ENCODE measurements at regions of chr20 and their contacts with region 1.

Region 1: DNA sequence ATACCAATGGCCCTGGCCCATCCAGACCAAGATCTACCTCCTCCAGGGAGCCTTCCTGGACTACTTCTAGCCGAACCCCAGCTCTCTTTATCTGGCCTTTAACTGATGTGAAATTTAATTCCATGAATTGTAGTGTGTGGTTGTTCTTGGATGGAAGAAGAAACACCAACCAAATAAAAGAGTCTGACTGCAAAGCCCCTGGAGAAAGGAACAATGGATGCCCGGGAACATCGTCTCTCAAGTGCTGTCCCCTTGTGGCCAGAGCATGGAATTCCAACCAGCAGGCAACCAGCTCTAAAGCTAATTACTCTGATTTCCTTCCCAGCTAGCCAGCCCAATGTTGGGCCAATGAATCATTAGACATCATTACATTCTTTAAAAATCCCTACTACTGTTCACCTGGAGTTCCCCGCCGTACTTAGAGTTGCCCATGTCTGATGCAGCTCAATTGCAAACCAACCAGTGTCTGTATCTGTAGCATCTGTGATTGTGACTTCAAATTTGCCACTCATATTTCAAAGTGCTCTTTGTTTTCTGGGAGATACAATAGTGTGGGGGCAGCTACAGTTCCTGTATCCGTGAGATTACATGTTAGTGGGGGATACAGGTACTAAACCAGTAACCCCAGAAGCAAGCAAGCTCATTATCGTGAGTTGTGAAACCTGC is 141.1 kb downstream of the ANKRD60 start:
- DNase-seq: peak in 1 of 2 experiments; percentile 67
- H3K4me3 ChIP-seq: no peak overlapping the region
- H3K27ac ChIP-seq: no peak overlapping the region
- H3K4me1 ChIP-seq: peaks cover 0 to 3% (median 0%) of the 10 kb centered on the region in 4 experiments; a peak in 1 of 7 replicates
- H3K27me3 ChIP-seq: no peaks in the 10 kb centered on the region; a peak in 1 of 7 replicates
- CTCF ChIP-seq: peak; percentile 90 to 97 (median 90)
- EP300 ChIP-seq: no peak
- POLR2A ChIP-seq: no peak
- RAD21 ChIP-seq: peak; percentile 89 to 92

Region 2: DNA sequence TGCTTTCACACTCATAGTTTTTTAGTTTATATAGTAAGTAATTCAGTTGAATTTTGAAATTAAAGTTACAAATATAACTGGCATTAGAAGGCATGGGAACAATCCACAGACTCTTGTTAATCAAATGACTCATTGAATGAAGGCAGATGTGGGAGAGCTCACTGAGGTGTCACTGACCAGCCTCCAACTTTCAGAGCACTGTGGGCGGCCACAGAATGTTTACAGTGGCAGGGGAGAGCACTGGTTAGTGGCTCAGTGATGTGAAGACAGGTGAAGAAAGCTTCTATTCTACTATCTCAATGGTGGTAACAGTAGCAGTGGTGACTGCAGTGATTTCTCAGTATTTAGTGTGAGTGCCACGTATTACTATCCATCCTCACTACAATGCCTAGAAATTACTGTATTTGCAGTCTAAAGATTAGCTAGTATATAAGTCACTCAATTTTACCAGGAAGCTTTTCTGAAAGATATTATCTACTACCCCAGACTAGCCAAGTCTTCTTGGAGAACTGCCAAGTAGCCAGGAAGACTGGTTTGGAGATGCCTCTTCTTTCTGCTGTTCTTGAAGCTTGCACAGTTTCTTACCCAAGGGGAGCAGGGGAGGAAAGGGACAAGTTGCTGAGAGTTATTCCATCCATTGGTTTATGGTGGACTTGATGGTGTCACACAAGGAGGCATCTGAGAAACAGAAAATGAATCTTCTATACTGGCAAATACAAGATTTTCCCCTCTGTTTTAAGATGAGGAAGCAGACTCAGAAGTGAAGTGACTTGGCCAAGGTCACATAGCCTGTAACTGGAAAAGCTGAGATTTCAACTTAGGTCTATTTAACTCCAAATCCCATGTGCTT is 90.1 kb before region 1 on chr20:
- CTCF ChIA-PET with region 1: interaction called, 11 read pairs
- POLR2A ChIA-PET with region 1: no interaction called
- DNase-seq: no peak
- H3K4me3 ChIP-seq: no peak overlapping the region
- H3K27ac ChIP-seq: no peak overlapping the region
- H3K4me1 ChIP-seq: peaks cover 0 to 7% (median 6%) of the 10 kb centered on the region in 4 experiments; a peak in 5 of 7 replicates
- H3K27me3 ChIP-seq: 0 out of 7 replicates have a peak, but pooled peaks cover 0 to 3% (median 0%) of the 10 kb centered on the region in 4 experiments
- CTCF ChIP-seq: no peak
- EP300 ChIP-seq: no peak
- POLR2A ChIP-seq: no peak
- RAD21 ChIP-seq: no peak

Region 3: DNA sequence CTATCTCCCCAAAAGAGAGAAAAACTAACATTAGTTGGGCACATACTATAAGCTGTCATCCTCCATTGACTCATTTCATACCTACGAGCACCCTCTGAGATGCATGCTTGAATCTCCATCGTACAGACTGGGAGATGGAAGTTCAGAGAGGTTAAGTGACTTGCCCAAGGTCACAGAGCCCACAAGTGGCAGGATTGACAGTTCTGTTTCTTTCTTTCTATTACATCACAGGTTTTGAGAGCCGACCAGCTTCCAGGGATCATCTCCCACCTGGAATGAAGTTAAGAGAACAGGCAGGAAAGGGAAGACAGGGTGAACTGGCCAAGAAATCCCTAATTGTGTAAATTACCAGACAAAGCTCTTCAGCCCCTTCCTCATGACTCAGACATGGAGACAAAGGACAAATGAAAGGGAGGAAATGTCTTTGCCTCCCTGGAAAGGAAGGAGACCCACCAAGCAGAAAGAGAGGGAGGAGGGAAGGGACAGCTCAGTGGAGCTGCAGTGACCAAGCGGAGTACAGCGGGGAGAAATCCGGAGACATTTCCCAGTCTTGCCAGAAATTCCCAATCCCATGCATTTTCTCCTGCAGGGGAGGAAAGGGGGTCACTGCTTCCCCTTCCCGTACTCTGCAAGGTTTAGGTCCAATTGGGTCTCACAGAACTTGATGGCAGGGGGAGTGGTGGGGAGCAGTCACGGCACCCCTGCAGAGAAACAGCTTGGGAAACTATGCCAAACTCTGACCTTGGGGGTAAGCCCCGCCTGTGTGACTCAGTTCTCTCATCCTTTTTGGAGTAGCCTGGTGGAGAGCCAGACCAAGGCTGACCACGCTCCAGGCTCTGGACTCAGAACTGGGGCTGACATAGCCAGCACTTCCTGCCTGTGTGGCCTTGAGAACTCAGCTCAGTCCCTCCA is 13.1 kb before region 1 on chr20:
- CTCF ChIA-PET with region 1: interaction called, 36 read pairs
- POLR2A ChIA-PET with region 1: no interaction called
- DNase-seq: peak in 1 of 2 experiments; percentile 28
- H3K4me3 ChIP-seq: no peak overlapping the region
- H3K27ac ChIP-seq: no peak overlapping the region
- H3K4me1 ChIP-seq: no peaks in the 10 kb centered on the region; a peak in 1 of 7 replicates
- H3K27me3 ChIP-seq: no peaks in the 10 kb centered on the region
- CTCF ChIP-seq: no peak
- EP300 ChIP-seq: no peak
- POLR2A ChIP-seq: no peak
- RAD21 ChIP-seq: no peak

Region 4: GRCh38 chr20:58117944-58118343 is 30.6 kb after region 1 on chr20:
- CTCF ChIA-PET with region 1: interaction called, 10 read pairs
- POLR2A ChIA-PET with region 1: no interaction called
- DNase-seq: no peak
- H3K4me3 ChIP-seq: no peak overlapping the region
- H3K27ac ChIP-seq: no peak overlapping the region
- H3K4me1 ChIP-seq: no peaks in the 10 kb centered on the region
- H3K27me3 ChIP-seq: no peaks in the 10 kb centered on the region; a peak in 2 of 7 replicates
- CTCF ChIP-seq: no peak
- EP300 ChIP-seq: no peak
- POLR2A ChIP-seq: no peak
- RAD21 ChIP-seq: no peak

Measured in H1 (cell line).